Esophagus muscularis mucosa (tissue), 4 donors: ENCODE measurements at regions of chr6 and their contacts with region 1.

Region 1: DNA sequence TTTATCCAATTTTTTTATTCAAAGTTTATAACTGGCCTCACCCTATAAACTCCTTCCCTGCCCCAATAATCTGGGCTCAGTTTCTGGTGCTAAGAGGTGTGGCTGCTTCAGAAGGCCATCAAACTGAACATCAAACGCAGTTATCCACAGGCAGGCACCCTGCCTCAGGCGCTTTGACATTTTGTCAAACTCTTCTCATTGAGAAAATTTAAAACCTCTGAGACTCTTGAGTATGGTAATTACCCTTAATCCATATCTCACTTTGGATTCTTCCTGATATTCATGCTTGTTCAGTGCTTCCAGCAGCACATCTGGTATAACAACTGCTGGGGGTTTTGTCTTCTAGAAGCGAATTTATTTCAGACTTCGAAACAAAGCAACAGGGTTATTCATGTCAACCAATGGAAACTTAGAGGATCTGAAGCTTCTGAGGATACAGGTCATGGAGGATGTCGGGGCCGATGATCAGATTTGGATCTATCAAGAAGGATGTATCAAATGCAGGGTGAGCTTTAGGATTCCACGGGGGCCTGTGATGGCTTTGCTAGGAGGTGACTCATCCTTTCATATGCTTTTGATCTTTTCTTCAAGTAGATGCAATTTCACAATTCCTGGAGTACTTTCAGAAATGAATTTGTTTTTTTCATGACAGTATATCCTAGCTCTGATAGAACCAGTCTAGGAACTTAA is 68.2 kb downstream of the RTN4IP1 start:
- DNase-seq: peak; percentile 86
- H3K4me3 ChIP-seq: no peak overlapping the region
- H3K27ac ChIP-seq: no peak overlapping the region
- H3K4me1 ChIP-seq: no peaks in the 10 kb centered on the region
- H3K27me3 ChIP-seq: no peaks in the 10 kb centered on the region
- CTCF ChIP-seq: no peak
- EP300 ChIP-seq: no peak
- POLR2A ChIP-seq: no peak

Region 2: DNA sequence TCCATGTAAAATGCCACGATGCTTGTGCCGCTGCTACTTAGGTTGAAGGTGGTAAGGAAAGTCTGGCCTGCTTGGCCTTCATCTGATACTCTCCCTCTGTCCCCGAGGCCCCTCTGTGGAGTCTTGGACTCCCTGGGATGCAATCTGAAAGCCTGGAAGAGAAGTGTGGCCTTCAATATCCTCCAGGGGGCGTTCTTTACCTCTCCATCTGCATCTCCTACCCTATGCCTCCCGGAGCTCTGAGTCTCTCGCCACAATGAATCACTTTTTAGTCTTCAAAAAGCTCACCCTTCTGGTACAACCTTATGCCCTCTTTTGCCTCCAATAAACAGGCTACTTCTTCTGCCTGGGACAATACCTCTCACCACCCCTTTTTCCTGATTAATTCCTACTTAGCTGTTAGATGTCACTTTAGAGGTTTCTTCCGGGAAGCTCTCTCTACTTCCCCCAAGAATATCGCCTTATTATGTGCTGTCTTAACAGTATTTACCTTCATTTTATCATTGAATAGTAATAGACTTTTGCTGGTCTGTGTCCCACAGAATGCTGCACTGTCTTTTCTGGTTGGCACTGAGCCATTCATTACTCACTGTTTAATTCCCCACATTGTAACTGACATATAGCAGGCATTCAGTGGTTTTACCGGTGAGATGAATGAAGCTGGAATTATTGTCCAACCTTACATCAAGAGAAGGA is 221.7 kb before region 1 on chr6:
- intact Hi-C with region 1: loop called (anchors 2 kb)
- DNase-seq: no peak
- H3K4me3 ChIP-seq: no peak overlapping the region
- H3K27ac ChIP-seq: no peak overlapping the region
- H3K4me1 ChIP-seq: peaks cover 0 to 6% (median 1%) of the 10 kb centered on the region in 4 donors
- H3K27me3 ChIP-seq: peaks cover 0 to 4% (median 0%) of the 10 kb centered on the region in 4 donors
- CTCF ChIP-seq: peak; percentile 60 to 67 (median 61)
- EP300 ChIP-seq: no peak
- POLR2A ChIP-seq: no peak

Region 3: GRCh38 chr6:106444777-106445507 is 116.2 kb before region 1 on chr6:
- intact Hi-C with region 1: loop called (anchors 2 kb)
- DNase-seq: no peak
- H3K4me3 ChIP-seq: no peak overlapping the region
- H3K27ac ChIP-seq: no peak overlapping the region
- H3K4me1 ChIP-seq: no peaks in the 10 kb centered on the region
- H3K27me3 ChIP-seq: peaks cover 0 to 24% (median 0%) of the 10 kb centered on the region in 4 donors
- CTCF ChIP-seq: peak; percentile 47 to 75 (median 65)
- EP300 ChIP-seq: no peak
- POLR2A ChIP-seq: no peak

Region 4: GRCh38 chr6:106608062-106608668 is 47.0 kb after region 1 on chr6:
- intact Hi-C with region 1: no loop called
- DNase-seq: no peak
- H3K4me3 ChIP-seq: no peak overlapping the region
- H3K27ac ChIP-seq: no peak overlapping the region
- H3K4me1 ChIP-seq: no peaks in the 10 kb centered on the region
- H3K27me3 ChIP-seq: no peaks in the 10 kb centered on the region
- CTCF ChIP-seq: peak; percentile 33 to 54 (median 34)
- EP300 ChIP-seq: no peak
- POLR2A ChIP-seq: no peak

Region 5: DNA sequence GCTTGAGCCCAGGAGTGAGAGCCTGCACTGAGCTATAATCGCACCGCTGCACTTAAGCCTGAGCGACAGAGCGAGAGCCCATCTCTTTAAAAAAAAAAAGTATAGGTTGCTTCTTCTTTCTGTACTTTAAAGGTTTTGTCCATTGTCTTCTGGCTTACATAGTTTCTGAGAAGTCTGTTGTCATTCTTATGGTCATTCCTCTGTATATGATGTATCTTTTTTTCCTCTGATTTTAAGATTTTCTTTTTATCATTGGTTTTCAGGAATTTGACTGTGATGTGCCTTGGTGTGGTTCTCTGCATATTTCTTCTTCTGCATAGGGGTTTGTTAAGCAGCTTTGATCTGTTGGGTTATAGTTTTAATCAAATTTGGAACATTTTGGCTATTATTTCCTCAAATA is 97.3 kb after region 1 on chr6:
- intact Hi-C with region 1: no loop called
- DNase-seq: no peak
- H3K4me3 ChIP-seq: no peak overlapping the region
- H3K27ac ChIP-seq: no peak overlapping the region
- H3K4me1 ChIP-seq: no peaks in the 10 kb centered on the region
- H3K27me3 ChIP-seq: no peaks in the 10 kb centered on the region
- CTCF ChIP-seq: no peak
- EP300 ChIP-seq: no peak
- POLR2A ChIP-seq: no peak